Gastrocnemius medialis (tissue), 4 donors: ENCODE measurements at regions of chr5 and their contacts with region 1.

Region 1: GRCh38 chr5:41755705-41756104 is 114.5 kb downstream of the OXCT1 start:
- DNase-seq: no peak
- ATAC-seq: no peak
- H3K4me3 ChIP-seq: no peak overlapping the region
- H3K27ac ChIP-seq: no peak overlapping the region
- H3K4me1 ChIP-seq: peaks cover 0 to 3% of the 10 kb centered on the region in 2 donors
- H3K27me3 ChIP-seq: no peaks in the 10 kb centered on the region
- CTCF ChIP-seq: no peak
- POLR2A ChIP-seq: no peak

Region 2: GRCh38 chr5:41176952-41177351 is 578.8 kb before region 1 on chr5:
- in situ Hi-C with region 1: no loop called
- intact Hi-C with region 1: no loop called
- DNase-seq: no peak
- ATAC-seq: no peak
- H3K4me3 ChIP-seq: no peak overlapping the region
- H3K27ac ChIP-seq: no peak overlapping the region
- H3K4me1 ChIP-seq: no peaks in the 10 kb centered on the region
- H3K27me3 ChIP-seq: no peaks in the 10 kb centered on the region
- CTCF ChIP-seq: no peak
- POLR2A ChIP-seq: no peak

Region 3: GRCh38 chr5:41843456-41844370 is 88.0 kb after region 1 on chr5:
- in situ Hi-C with region 1: no loop called
- intact Hi-C with region 1: loop called (anchors 2 kb)
- DNase-seq: no peak
- ATAC-seq: peak in 1 of 2 donors; percentile 60
- H3K4me3 ChIP-seq: no peak overlapping the region
- H3K27ac ChIP-seq: no peak overlapping the region
- H3K4me1 ChIP-seq: no peaks in the 10 kb centered on the region
- H3K27me3 ChIP-seq: no peaks in the 10 kb centered on the region
- CTCF ChIP-seq: peak; percentile 47 to 80 (median 68)
- POLR2A ChIP-seq: no peak